ENCODE measurements at regions of chr3 and their contacts with region 1.

Region 1: DNA sequence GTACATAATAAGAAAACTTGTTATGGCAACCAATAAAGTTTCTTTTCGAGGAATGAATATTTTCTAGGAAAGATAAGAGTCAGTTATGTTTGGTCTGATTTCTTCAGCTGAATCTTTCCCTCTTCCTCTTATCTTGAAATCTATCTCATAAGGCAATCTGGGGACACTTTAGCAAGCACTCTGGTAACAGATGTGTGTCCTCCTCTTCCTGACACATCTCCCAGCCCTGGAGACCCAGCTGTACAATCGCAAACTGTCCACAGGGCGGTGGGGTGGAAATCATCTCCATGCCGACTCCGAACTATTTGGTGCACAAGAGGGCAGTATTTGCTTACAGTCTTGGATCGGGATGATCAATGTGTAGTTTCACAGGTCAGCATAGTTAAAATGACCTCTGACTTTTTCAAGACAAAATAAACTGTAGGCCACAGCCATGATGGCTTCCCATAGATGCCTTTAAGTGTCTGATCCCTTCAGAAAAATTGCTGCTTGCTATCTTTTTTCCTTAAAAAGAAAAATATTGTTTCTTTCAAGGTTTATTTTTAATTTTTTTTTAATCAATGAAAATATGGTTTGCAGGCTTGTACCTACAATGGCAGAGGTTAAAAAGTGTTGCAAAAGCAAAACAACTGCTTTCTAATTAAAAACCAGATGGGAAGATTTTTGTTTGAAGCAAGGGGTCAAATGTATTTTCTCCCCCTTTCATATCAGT is 17.7 kb downstream of the EEFSEC start:
- DNase-seq: peak; percentile 69 to 71
- H3K4me3 ChIP-seq: no peak overlapping the region
- H3K27ac ChIP-seq: no peak overlapping the region
- H3K4me1 ChIP-seq: peaks cover 21% of the 10 kb centered on the region
- H3K27me3 ChIP-seq: no peaks in the 10 kb centered on the region
- CTCF ChIP-seq: peak; percentile 78

Region 2: DNA sequence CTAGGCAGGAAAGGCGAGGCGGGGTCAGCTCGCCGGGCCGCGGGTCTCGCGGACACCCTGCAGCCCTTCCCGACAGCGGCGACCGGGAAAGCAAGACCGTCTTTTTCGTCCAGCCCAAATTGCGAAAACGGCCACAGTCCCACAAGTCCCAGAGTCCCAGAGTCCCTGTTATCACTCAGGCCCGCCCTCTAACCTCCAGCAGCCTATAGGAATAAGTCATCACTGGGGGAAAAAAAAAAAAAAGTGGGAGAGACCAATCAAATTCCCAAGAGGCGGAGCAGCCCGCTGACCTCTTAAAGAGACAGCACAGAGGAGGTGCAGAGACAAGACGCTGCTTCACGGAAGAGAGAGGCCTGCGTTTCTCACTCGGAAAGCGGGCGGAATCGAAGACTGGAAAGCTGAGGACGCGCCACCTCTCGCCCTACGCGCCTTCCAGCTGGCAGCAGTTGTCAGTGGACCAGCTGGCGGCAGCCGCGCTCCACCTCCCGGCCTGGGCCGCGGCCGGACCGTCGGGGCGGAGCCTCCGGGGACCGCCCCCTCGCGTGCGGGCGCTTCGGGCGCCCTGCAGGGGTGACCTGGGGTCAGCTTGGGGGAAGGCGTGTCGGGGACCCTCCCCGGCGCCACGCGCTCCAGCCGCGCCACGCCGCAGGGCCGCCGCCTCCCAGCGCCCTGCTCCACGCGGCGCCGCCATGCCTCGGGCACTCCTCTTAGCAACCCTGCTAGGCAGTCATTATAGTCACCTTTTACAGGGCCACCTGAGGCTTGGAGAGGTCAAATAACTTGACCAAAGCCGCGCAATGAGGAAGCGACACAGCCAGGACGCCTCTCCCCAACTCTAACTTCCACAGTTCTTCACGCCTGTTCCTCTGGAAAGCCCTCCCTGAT is 580.1 kb before region 1 on chr3 and contains the start of gene TPRA1:
- CTCF ChIA-PET with region 1: no interaction called
- POLR2A ChIA-PET with region 1: no interaction called
- intact Hi-C with region 1: no loop called
- DNase-seq: peak; percentile 94 to 96
- H3K4me3 ChIP-seq: peak within 1 kb of the TSS; percentile 70
- H3K27ac ChIP-seq: peak within 1 kb of the TSS; percentile 92
- H3K4me1 ChIP-seq: peaks cover 22% of the 10 kb centered on the region
- H3K27me3 ChIP-seq: no peaks in the 10 kb centered on the region
- CTCF ChIP-seq: no peak
- total RNA-seq, gene TPRA1: 58.5 and 66.5 TPM in 2 replicates

Region 3: DNA sequence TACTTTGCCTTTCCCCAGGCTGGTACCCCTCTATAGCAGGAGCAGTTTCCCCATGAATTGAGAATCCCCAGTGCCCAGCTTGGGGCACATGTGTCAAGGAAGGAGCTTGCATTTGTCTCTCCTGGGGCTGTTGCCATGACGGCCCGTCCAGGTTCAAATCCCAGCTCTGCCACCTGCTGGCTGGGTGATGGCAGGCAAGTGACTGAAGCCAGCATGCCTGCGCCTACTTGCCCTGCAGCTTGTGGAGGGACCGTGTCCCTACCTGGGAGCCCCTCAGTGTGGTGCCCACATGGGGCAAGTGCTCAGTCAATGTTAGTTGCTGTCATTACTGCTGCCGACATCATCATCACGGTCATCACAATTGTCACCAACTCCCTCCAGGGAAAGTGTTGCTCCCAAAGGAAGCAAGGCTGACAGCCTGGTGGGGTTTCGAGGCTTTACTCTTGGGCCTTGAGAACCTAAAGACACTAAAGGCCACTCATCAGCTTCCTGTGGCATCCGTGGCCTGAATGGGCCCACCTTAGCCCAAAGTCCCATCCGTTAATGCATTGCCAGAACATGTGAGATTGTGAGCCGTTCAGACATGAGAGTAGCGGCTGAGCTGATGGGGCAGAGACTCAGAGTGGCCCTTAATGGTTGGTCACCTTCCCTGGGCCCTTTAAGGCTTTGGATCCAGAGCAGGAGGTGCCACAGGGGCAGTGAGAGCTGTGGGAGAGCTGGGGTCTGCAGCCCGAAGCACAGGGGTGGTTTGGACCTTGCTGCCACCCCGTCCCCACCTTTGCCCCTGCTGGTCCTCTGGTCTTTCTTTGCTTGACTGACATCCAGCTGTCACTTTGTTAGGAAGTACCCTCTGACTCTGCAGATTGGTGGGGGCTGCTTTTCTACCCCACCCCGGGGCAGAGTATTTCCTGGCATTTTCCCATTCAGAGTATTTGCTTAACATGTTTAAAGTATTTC is 151.4 kb after region 1 on chr3:
- CTCF ChIA-PET with region 1: no interaction called
- POLR2A ChIA-PET with region 1: no interaction called
- intact Hi-C with region 1: loop called (anchors 1 kb)
- DNase-seq: peak; percentile 42 to 49
- H3K4me3 ChIP-seq: no peak overlapping the region
- H3K27ac ChIP-seq: no peak overlapping the region
- H3K4me1 ChIP-seq: peaks cover 15% of the 10 kb centered on the region
- H3K27me3 ChIP-seq: no peaks in the 10 kb centered on the region
- CTCF ChIP-seq: peak; percentile 55

Region 4: DNA sequence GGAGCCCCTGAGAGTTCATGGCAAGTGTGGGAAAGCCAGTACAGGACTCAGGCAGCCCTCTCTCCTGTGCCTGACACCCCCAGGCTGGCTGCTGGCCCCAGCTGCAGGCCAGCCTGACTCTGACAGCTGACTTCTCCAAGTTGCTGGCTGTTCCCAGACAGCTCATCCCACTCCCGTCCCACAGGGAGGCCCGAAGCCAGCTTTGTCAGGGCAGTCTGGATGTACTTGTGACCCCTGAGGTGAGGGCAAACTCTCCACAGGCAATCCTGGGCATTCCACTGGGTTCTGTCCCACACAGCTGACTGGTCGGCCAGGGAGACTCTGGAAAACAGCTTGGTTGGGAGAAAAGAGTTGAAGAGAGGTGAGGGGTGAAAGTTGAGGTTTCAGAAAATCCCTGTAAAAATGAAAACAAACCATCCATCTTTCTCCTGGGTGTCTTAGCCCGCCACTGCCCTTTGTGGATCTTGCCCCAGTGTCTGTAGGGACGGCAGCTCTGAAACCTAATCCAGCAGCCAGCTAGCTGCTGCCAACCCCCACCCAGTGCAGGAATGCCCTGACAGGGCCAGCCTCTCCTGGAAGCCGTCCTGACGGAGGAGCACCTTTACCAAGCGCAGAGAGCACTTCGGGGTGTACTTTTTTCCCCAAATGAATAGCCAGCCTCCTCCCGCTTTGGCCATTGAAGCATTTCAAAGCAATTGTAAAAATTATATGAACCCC is 207.8 kb after region 1 on chr3:
- CTCF ChIA-PET with region 1: no interaction called
- POLR2A ChIA-PET with region 1: no interaction called
- intact Hi-C with region 1: no loop called
- DNase-seq: no peak
- H3K4me3 ChIP-seq: no peak overlapping the region
- H3K27ac ChIP-seq: no peak overlapping the region
- H3K4me1 ChIP-seq: peaks cover 18% of the 10 kb centered on the region
- H3K27me3 ChIP-seq: no peaks in the 10 kb centered on the region
- CTCF ChIP-seq: no peak

Region 5: GRCh38 chr3:128426128-128426921 is 255.4 kb after region 1 on chr3:
- CTCF ChIA-PET with region 1: no interaction called
- POLR2A ChIA-PET with region 1: no interaction called
- intact Hi-C with region 1: loop called (anchors 2 kb)
- DNase-seq: peak in 1 of 2 experiments; percentile 76
- H3K4me3 ChIP-seq: peak overlapping the region; percentile 20; the same call in 1 of the 2 replicates
- H3K27ac ChIP-seq: no peak overlapping the region
- H3K4me1 ChIP-seq: peaks cover 55% of the 10 kb centered on the region
- H3K27me3 ChIP-seq: no peaks in the 10 kb centered on the region
- CTCF ChIP-seq: peak; percentile 76

Region 6: GRCh38 chr3:128607710-128608048 is 436.7 kb after region 1 on chr3:
- CTCF ChIA-PET with region 1: no interaction called
- POLR2A ChIA-PET with region 1: no interaction called
- intact Hi-C with region 1: loop called (anchors 2 kb)
- DNase-seq: no peak
- H3K4me3 ChIP-seq: no peak overlapping the region
- H3K27ac ChIP-seq: no peak overlapping the region
- H3K4me1 ChIP-seq: no peaks in the 10 kb centered on the region
- H3K27me3 ChIP-seq: no peaks in the 10 kb centered on the region
- CTCF ChIP-seq: no peak

Measured in PC-9 (cell line).